ENCODE measurements at regions of chr21 and their contacts with region 1.

Region 1: GRCh38 chr21:17387030-17387617 is 125.7 kb upstream of the CXADR start:
- DNase-seq: peak in 7 of 9 donors; percentile 25 to 64 (median 56)
- ATAC-seq: peak; percentile 77
- H3K4me3 ChIP-seq: no peak overlapping the region
- H3K4me3 Mint-ChIP-seq: no peak overlapping the region
- H3K27ac ChIP-seq: no peak overlapping the region
- H3K27ac Mint-ChIP-seq: no peak overlapping the region
- H3K4me1 ChIP-seq: no peaks in the 10 kb centered on the region
- H3K4me1 Mint-ChIP-seq: peaks cover 0 to 4% (median 0%) of the 10 kb centered on the region in 7 donors
- H3K27me3 ChIP-seq: no peaks in the 10 kb centered on the region
- H3K27me3 Mint-ChIP-seq: peaks cover 0 to 4% (median 0%) of the 10 kb centered on the region in 5 donors

Region 2: DNA sequence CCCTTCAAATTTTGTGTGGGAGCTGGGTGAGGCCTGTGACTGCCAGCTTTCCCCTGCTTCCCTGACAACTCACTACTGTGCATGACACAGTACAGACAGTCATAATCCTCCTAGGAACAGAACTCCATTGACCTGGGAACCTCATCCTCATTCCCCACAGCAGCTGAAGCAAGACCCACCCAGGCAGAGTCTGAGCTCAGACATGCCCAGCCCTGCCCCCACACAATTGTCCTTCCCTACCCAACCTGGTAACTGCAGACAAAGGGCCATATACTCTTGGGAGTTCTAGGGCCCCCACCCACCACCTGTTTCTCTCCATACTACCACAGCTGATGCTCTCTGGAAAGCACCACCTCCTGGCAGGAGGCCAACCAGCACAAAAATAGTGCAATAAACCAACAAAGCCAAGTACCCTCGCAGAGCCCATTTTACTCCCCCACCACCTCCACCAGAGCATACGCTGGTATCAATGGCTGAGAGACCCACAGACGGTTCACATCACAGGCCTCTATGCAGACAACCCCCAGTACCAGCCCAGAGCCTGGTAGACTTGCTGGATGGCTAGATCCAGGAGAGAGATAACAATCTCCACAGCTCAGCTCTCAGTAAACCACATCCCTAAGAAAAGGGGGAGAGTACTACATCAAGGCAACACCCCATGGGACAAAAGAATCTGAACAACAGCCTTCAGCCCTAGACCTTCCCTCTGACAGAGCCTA is 34.0 kb before region 1 on chr21:
- CTCF ChIA-PET with region 1: no interaction called
- POLR2A ChIA-PET with region 1: no interaction called
- intact Hi-C with region 1: no loop called
- DNase-seq: no peak
- ATAC-seq: no peak
- H3K4me3 ChIP-seq: no peak overlapping the region
- H3K4me3 Mint-ChIP-seq: no peak overlapping the region
- H3K27ac ChIP-seq: no peak overlapping the region
- H3K27ac Mint-ChIP-seq: no peak overlapping the region
- H3K4me1 ChIP-seq: no peaks in the 10 kb centered on the region
- H3K4me1 Mint-ChIP-seq: no peaks in the 10 kb centered on the region
- H3K27me3 ChIP-seq: no peaks in the 10 kb centered on the region
- H3K27me3 Mint-ChIP-seq: peaks cover 0 to 22% (median 15%) of the 10 kb centered on the region in 5 donors

Region 3: GRCh38 chr21:17585875-17586450 is 198.8 kb after region 1 on chr21:
- CTCF ChIA-PET with region 1: interaction called, 32 read pairs
- POLR2A ChIA-PET with region 1: no interaction called
- intact Hi-C with region 1: loop called in 1 of 2 experiments (anchors 1 kb)
- DNase-seq: peak in 7 of 9 donors; percentile 15 to 47 (median 38)
- ATAC-seq: peak; percentile 57
- H3K4me3 ChIP-seq: no peak overlapping the region
- H3K4me3 Mint-ChIP-seq: no peak overlapping the region
- H3K27ac ChIP-seq: no peak overlapping the region
- H3K27ac Mint-ChIP-seq: no peak overlapping the region
- H3K4me1 ChIP-seq: no peaks in the 10 kb centered on the region
- H3K4me1 Mint-ChIP-seq: no peaks in the 10 kb centered on the region
- H3K27me3 ChIP-seq: no peaks in the 10 kb centered on the region
- H3K27me3 Mint-ChIP-seq: no peaks in the 10 kb centered on the region

Region 4: DNA sequence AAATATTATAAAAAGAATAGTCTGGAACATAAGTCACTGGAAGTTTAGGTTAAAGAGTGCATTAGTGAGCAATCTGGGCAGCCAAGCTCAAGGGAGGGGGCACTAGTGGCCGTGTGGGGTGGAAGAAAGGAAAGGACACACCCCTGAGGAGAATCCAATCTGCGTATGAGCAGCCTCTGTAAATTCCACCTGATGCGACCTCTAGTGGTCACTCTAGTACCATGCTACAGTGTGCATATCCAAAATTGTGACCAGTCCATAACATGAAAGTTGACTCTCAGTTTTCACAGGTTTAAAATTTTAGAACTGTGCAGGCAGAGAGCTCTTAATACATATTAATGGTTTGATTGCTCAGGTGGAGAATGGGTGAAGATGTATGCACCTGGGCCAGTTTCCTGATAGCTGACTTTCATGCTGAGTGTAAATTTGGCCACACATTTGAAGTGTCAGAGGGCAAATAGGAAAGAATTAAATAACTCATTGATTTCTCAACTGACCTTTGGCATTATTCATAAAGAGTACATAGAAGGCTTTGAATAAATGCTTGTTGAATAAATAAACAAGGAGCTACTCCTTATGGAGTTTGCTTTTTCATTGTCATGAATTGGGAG is 538.0 kb after region 1 on chr21:
- CTCF ChIA-PET with region 1: interaction called, 3 read pairs
- POLR2A ChIA-PET with region 1: no interaction called
- intact Hi-C with region 1: loop called (anchors 2 to 10 kb)
- DNase-seq: peak in 8 of 9 donors; percentile 9 to 54 (median 36)
- ATAC-seq: peak; percentile 96
- H3K4me3 ChIP-seq: no peak overlapping the region
- H3K4me3 Mint-ChIP-seq: no peak overlapping the region
- H3K27ac ChIP-seq: no peak overlapping the region
- H3K27ac Mint-ChIP-seq: no peak overlapping the region
- H3K4me1 ChIP-seq: no peaks in the 10 kb centered on the region
- H3K4me1 Mint-ChIP-seq: peaks cover 0 to 3% (median 0%) of the 10 kb centered on the region in 7 donors
- H3K27me3 ChIP-seq: no peaks in the 10 kb centered on the region
- H3K27me3 Mint-ChIP-seq: peaks cover 0 to 17% (median 5%) of the 10 kb centered on the region in 5 donors

Measured in naive thymus-derived CD4-positive, alpha-beta T cell (primary cell).